AG04450 (cell line): ENCODE measurements at regions of chr21 and their contacts with region 1.

Region 1: DNA sequence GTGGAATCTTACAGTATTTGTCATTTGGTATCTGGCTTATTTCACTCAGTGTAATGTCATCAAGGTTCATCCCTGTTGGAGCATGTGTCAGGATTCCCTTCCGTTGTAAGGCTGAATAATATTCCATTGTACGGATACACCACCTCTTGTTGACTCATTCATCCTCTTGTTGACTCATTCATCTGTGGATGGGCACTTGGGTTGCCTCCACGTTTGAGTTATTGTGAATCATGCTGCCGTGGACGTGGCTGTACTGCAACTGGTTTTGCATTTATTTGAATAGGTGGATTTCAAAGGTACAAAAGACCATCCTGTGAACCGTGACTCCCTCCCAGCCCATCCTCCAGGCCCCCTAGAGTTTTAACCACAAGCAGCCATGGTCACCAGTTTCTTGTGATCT is 11.9 kb upstream of the TCP10L start:
- DNase-seq: peak; percentile 47
- H3K4me3 ChIP-seq: no peak overlapping the region
- H3K27ac ChIP-seq: peak overlapping the region; percentile 61
- H3K27me3 ChIP-seq: no peaks in the 10 kb centered on the region
- CTCF ChIP-seq: no peak

Region 2: GRCh38 chr21:32359711-32360260 is 237.4 kb before region 1 on chr21:
- CTCF ChIA-PET with region 1: interaction called, 35 read pairs
- POLR2A ChIA-PET with region 1: interaction called, 4 read pairs
- DNase-seq: no peak
- H3K4me3 ChIP-seq: no peak overlapping the region
- H3K27ac ChIP-seq: no peak overlapping the region
- H3K27me3 ChIP-seq: no peaks in the 10 kb centered on the region
- CTCF ChIP-seq: peak; percentile 31; the same call in 1 of the 2 replicates

Region 3: GRCh38 chr21:32403201-32403777 is 193.9 kb before region 1 on chr21:
- CTCF ChIA-PET with region 1: interaction called, 245 read pairs
- POLR2A ChIA-PET with region 1: interaction called, 7 read pairs
- DNase-seq: peak; percentile 55
- H3K4me3 ChIP-seq: no peak overlapping the region
- H3K27ac ChIP-seq: peak overlapping the region; percentile 11
- H3K27me3 ChIP-seq: peaks cover 10% of the 10 kb centered on the region
- CTCF ChIP-seq: peak; percentile 72

Region 4: GRCh38 chr21:32448803-32449594 is 148.2 kb before region 1 on chr21:
- CTCF ChIA-PET with region 1: interaction called, 11 read pairs
- POLR2A ChIA-PET with region 1: no interaction called
- DNase-seq: no peak
- H3K4me3 ChIP-seq: no peak overlapping the region
- H3K27ac ChIP-seq: peak overlapping the region; percentile 31
- H3K27me3 ChIP-seq: no peaks in the 10 kb centered on the region
- CTCF ChIP-seq: no peak

Region 5: GRCh38 chr21:32587120-32587519 is 10.1 kb before region 1 on chr21:
- CTCF ChIA-PET with region 1: interaction called, 39 read pairs
- POLR2A ChIA-PET with region 1: interaction called, 10 read pairs
- DNase-seq: no peak
- H3K4me3 ChIP-seq: no peak overlapping the region
- H3K27ac ChIP-seq: no peak overlapping the region
- H3K27me3 ChIP-seq: peaks cover 21% of the 10 kb centered on the region
- CTCF ChIP-seq: no peak